Colonic mucosa (tissue), 4 donors: ENCODE measurements at regions of chr17 and their contacts with region 1.

Region 1: GRCh38 chr17:39147221-39148185 is 3.9 kb downstream of the PLXDC1 start:
- DNase-seq: no peak
- H3K4me3 ChIP-seq: no peak overlapping the region
- H3K27ac ChIP-seq: no peak overlapping the region
- H3K4me1 ChIP-seq: no peaks in the 10 kb centered on the region
- H3K27me3 ChIP-seq: peaks cover 18% of the 10 kb centered on the region
- CTCF ChIP-seq: no peak

Region 2: DNA sequence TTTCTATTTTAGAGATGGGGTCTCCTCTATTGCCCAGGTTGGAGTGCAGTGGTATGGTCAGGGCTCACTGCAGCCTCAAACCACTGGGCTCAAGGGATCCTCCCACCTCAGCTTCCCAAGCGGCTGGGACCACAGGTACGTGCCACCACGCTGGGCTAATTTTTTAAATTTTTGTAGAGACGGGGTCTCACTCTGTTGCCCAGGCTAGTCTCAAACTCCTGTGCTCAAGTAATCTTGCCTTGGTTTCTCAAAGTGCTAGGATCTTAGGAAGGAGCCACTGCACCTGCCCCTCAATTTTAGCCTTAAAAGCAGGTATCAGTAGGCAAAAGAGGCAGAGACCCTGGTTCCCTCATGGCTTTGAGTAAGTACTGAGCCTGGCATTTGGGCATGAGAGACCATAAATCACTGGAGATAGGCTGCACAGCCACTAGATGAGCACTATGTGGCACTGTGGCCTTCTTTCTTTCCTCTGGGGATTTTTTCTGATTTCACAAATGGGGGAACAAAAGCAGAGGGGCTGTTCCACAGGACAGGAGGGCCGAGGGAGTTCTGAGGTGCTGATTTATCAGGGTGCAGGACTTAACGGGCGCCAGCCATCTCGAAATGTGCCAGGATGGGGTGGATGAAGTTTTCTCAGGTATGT is 78.3 kb before region 1 on chr17:
- intact Hi-C with region 1: loop called (anchors 5 kb)
- DNase-seq: no peak
- H3K4me3 ChIP-seq: no peak overlapping the region
- H3K27ac ChIP-seq: no peak overlapping the region
- H3K4me1 ChIP-seq: no peaks in the 10 kb centered on the region
- H3K27me3 ChIP-seq: no peaks in the 10 kb centered on the region
- CTCF ChIP-seq: peak; percentile 38

Region 3: GRCh38 chr17:39199820-39200069 is 52.2 kb after region 1 on chr17:
- intact Hi-C with region 1: no loop called
- DNase-seq: peak; percentile 91
- H3K4me3 ChIP-seq: peak overlapping the region; percentile 96
- H3K27ac ChIP-seq: peak overlapping the region; percentile 91
- H3K4me1 ChIP-seq: peaks cover 10% of the 10 kb centered on the region
- H3K27me3 ChIP-seq: no peaks in the 10 kb centered on the region
- CTCF ChIP-seq: no peak

Region 4: DNA sequence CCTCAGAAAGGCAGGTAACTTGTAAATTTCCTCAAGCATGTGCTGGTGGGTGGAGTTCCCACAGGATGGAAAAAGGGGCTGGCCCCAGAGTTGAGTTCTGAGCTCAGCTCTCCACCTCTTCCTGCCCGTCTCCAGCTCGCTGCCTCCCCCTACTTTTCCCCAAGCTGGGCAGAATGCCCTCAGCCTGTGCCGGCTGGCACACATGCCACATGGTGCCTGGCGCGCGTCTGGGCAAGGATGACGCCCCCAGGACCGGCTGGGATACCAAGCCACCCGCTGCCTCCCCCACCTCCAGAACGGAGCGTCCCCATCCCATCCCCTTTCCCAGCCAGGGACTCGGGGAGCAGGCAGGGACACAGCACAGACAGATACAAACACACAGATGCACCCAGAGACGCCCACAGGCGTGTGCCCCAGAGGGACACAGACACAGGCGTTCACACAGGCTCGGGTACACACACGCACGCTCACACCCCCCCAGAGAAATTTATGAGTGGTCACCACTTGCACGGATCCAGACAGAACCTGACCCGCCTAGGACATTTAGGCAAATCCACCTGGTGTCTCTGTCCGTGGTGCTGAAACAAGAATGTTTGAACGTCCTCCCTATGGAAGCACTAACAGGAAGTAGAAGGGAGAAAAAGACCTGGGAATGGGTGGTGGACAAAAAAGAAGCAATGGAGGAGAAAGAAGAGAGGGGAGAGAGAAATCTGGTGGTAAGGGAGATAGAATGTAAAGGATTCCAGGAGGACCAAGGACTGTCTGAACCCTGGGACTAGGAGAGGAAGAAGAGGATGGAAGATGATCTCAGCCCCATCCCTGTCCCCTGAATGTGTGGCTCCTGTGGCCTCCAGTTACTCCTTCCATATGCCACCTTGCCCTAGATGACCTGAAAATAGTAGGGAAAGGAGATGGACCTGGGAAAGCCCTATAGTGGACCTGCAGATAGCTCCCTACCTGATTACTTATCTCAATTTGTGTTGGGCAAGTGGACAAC is 444.8 kb after region 1 on chr17:
- intact Hi-C with region 1: no loop called
- DNase-seq: peak; percentile 72
- H3K4me3 ChIP-seq: no peak overlapping the region
- H3K27ac ChIP-seq: no peak overlapping the region
- H3K4me1 ChIP-seq: no peaks in the 10 kb centered on the region
- H3K27me3 ChIP-seq: peaks cover 20% of the 10 kb centered on the region
- CTCF ChIP-seq: no peak